ENCODE measurements at regions of chr17 and their contacts with region 1.

Region 1: DNA sequence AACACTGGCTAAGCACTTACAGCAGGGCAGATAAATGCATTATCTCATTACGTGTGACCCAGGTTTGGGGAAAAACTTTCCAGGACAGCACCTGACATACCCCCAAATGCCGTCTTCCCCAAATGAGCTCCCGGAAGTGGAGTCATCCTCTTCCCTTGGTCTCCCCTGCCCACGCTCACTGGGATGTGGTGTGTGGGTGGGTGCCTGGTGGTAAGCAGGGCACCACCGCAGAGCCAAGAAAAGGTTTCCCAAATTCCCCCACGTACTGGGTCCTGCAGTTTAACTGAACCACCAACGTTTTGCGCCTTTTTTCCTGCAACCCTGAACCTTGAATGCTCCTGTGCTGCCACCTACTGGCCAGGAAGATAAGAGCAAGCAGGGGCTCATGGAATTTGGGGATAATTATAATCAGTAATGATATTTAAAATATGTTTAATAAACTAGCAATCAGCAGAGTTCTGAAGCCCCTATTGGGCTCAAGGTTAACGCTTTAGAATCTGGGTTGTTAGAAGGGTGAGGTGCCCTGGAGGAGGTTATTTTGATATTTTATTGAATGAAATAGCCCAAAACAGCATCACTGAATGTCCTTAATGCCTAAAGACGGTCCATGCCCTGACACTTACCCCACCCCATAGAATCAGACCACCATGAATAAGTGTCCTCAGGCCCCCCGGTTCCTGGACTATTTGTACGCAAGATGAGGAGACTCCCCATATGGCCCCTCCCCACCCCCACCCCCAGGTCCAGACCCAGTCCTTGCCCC is 8.0 kb downstream of the SPPL2C start:
- DNase-seq: peak; percentile 78
- ATAC-seq: peak; percentile 44
- H3K4me3 Mint-ChIP-seq: no peak overlapping the region
- H3K27ac Mint-ChIP-seq: no peak overlapping the region
- H3K4me1 Mint-ChIP-seq: peaks cover 4% of the 10 kb centered on the region
- H3K27me3 Mint-ChIP-seq: peaks cover 12% of the 10 kb centered on the region

Region 2: GRCh38 chr17:45640141-45640850 is 212.4 kb before region 1 on chr17:
- CTCF ChIA-PET with region 1: interaction called, 15 read pairs
- POLR2A ChIA-PET with region 1: no interaction called
- intact Hi-C with region 1: loop called in 1 of 2 experiments (anchors 1 kb)
- DNase-seq: peak; percentile 84
- ATAC-seq: peak; percentile 80
- H3K4me3 Mint-ChIP-seq: no peak overlapping the region
- H3K27ac Mint-ChIP-seq: peak overlapping the region; percentile 40
- H3K4me1 Mint-ChIP-seq: peaks cover 4% of the 10 kb centered on the region
- H3K27me3 Mint-ChIP-seq: no peaks in the 10 kb centered on the region

Region 3: GRCh38 chr17:45719335-45720071 is 133.2 kb before region 1 on chr17:
- CTCF ChIA-PET with region 1: no interaction called
- POLR2A ChIA-PET with region 1: no interaction called
- intact Hi-C with region 1: no loop called
- DNase-seq: peak; percentile 9
- ATAC-seq: no peak
- H3K4me3 Mint-ChIP-seq: no peak overlapping the region
- H3K27ac Mint-ChIP-seq: no peak overlapping the region
- H3K4me1 Mint-ChIP-seq: no peaks in the 10 kb centered on the region
- H3K27me3 Mint-ChIP-seq: peaks cover 24% of the 10 kb centered on the region

Region 4: DNA sequence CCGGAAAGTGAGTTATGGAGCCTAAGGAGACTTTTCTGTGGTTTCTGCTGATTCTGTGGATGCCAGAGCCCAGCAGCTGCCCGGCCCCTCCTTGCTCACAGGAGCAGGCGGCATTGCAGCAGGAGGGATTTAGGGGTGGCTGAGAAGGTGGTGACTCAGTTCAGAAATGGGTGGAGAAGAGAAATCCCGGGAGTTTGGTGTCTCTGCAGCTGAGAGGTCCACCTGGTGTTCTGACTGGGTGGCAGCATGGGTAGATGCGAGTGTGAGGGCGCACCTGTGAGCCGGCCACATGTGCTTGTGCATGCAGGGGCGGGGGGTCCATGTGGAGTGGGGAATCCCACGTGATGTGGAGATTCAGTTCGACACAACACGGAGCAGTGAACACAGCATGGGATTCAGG is 24.1 kb before region 1 on chr17:
- CTCF ChIA-PET with region 1: interaction called, 11 read pairs
- POLR2A ChIA-PET with region 1: no interaction called
- intact Hi-C with region 1: no loop called
- DNase-seq: no peak
- ATAC-seq: no peak
- H3K4me3 Mint-ChIP-seq: no peak overlapping the region
- H3K27ac Mint-ChIP-seq: no peak overlapping the region
- H3K4me1 Mint-ChIP-seq: no peaks in the 10 kb centered on the region
- H3K27me3 Mint-ChIP-seq: no peaks in the 10 kb centered on the region

Region 5: DNA sequence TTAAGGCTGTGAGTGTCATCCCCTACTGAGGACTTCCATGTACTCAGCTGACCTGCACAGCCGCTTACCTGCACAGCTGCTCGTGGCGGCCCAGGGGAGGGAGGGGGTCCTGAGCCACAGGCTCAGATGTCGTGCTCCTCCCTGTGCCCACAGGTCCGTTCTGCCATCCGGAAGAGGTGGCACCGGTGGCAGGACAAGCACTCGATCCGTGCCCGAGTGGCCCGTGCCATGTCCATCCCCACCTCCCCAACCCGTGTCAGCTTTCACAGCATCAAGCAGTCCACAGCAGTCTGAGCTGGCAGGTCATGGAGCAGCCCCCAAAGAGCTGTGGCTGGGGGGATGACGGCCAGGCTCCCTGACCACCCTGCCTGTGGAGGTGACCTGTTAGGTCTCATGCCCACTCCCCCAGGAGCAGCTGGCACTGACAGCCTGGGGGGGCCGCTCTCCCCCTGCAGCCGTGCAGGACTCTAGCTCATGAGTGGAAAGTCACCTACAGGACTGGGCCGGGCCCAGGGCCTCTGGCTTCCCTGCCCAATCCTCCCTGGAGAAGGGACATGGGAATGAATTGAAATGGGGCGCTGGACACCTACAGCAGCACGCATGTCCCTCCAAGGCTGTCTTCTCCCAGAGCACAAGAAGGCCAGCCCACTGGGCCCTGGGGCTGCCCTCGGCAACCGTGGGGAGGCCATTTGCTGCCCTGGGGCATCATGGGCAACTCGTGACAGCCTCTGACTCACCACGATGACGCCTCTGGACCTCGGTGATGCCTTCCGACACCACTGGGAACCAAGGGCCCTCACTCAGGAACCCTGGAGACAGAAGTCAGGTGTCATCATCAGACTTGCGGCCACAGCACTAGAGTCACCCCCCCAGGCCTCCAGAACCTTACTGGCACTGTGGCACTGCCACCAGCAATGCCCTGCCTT is 18.0 kb before region 1 on chr17:
- CTCF ChIA-PET with region 1: interaction called, 11 read pairs
- POLR2A ChIA-PET with region 1: no interaction called
- intact Hi-C with region 1: no loop called
- DNase-seq: no peak
- ATAC-seq: no peak
- H3K4me3 Mint-ChIP-seq: no peak overlapping the region
- H3K27ac Mint-ChIP-seq: no peak overlapping the region
- H3K4me1 Mint-ChIP-seq: no peaks in the 10 kb centered on the region
- H3K27me3 Mint-ChIP-seq: no peaks in the 10 kb centered on the region

Measured in activated CD4-positive, alpha-beta T cell treated with anti-CD3 and anti-CD28 coated beads for 36 hours (primary cell).